AG04449 (cell line): ENCODE measurements at regions of chr3 and their contacts with region 1.

Region 1: DNA sequence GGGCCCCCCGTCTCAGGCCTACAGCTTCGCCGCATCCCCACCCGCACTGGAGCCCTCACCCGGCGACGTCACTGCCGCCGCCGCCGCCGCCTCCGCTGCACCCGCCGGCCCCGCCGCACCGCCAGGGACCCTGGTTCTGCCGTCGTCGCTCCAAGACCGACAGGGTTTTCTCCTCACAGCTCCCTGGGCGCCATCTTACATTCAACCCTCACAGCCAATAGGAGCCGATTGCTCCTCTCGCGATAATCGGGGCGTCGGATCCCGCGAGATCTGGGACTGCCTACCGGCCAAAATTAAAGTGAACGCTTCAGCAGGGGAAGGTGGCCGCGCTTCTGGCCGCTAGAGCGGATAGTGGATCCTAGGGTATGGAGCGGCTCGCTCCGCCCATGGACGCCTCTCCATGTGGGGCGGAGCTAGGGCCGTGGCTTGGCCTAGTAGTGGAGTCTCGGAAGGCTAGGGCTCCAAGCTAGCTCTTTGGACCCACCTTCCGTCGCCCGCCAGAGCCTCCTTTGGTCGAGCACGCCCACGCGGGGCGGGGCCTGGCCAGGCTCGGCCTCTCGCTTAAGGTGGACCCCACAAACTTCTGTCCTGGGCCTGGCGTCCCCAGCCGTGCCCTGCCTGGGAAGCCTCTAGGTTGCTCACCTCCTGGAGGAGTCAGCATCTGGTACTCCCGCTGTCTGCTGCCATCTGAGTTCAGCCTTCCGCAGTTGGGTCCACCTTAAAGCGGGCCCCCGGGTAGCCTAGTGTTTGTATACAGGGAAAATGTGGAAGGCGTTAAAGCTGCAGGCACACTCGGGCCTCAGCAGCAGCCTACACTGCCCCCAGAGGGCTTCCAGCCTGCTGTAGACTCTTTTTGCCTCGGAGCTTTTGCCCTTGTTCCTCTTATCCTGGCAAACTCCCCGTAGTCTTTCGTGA is at the start of gene QRICH1:
- DNase-seq: peak; percentile 87
- H3K4me3 ChIP-seq: peak within 1 kb of the TSS; percentile 89
- CTCF ChIP-seq: peak; percentile 70

Region 2: DNA sequence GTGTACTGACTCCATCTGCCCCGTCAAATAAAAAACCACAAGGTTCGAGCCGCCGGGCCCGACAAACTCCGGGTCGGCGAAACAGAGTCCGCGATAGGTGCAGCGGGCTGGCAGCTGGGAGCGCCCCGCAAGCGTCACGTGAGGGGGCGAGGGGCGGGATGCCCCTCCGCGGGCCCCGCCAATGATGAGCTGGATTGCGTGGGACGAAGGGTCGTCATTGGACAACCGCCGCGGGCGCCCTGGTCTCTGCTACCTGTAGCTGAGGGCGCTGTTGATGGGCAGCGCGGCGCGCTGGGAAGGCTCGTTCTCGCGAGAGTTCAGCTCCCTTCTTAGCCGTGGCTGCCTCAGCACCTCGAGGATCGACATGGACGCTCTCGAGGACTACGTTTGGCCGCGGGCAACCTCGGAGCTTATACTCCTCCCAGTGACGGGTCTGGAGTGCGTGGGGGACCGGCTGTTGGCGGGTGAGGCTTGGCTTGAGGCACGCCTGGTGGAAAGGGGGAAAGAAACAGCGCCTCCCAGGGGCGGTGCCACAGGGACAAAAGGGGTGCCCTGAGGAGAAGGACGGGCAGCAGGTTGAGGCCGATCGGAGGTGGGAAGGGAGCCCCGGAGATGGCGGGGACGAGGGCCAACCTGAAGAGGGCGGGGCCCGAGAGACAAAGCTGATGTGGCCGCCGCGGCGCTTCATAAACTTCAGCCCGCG is 86.9 kb before region 1 on chr3 and contains the start of gene WDR6:
- CTCF ChIA-PET with region 1: no interaction called
- POLR2A ChIA-PET with region 1: interaction called, 11 read pairs
- DNase-seq: peak; percentile 83
- H3K4me3 ChIP-seq: peak within 1 kb of the TSS; percentile 97
- CTCF ChIP-seq: peak; percentile 44

Region 3: GRCh38 chr3:49028673-49029562 is 65.2 kb before region 1 on chr3 and contains the start of gene IMPDH2:
- CTCF ChIA-PET with region 1: interaction called, 25 read pairs
- POLR2A ChIA-PET with region 1: interaction called, 25 read pairs
- DNase-seq: no peak
- H3K4me3 ChIP-seq: peak within 1 kb of the TSS; percentile 90
- CTCF ChIP-seq: peak; percentile 14

Region 4: DNA sequence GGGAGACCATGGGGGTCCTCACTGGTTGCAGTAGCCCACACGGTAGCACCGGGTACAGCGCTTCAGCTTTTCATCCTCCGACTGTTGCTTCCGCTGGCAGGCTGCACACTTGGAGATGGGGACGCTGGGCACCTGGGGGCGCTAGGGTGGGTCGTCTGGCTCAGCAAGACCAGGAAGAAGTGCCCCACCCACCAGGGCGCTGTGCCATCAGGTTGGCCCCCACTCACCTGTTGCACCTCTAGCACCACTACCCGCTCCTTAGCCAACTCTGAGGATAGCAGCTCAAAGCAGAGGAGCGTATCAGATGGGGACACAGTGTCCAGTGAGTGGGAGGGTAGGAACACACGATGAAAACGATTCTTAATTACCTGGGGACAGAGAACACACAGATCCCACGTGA is 18.2 kb after region 1 on chr3:
- CTCF ChIA-PET with region 1: interaction called, 15 read pairs
- POLR2A ChIA-PET with region 1: interaction called, 23 read pairs
- DNase-seq: no peak
- H3K4me3 ChIP-seq: no peak overlapping the region
- CTCF ChIP-seq: no peak

Region 5: DNA sequence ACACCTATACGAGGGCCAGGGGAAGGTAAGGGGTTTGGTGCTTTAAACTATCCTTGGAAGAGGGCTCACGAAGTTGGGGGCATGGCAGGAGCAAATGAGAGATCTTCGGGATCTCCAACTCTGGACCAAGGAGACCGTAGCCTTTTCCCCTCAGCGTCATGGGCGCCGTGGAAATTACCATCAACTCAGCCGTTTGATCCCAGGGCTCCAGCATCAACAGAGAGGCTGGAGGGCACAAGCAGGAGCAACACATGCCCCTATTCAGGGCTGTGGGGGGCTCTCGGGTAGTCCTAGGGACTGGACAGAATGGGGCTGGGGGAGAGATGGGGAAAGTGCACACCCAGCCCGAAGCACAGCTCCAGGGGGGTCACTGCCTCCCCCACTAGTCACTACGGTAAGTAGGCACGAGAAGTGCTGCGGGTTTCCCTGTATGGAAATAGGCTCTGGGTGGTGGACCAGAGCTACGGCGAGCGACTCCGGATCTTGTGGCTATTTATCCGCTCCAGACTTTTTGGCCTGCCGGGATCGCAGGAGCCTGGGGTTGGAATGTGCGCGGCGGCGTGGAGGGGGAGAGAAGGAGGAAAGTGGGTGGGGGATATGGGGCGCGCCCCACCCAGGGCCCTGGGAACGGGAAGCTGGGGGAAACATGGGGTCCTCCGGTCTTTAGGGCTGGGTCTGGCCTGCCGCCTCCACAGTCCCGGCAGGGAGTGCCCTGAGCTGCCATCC is 39.3 kb after region 1 on chr3:
- CTCF ChIA-PET with region 1: interaction called, 5 read pairs
- POLR2A ChIA-PET with region 1: interaction called, 31 read pairs
- DNase-seq: peak; percentile 59
- H3K4me3 ChIP-seq: peak overlapping the region; percentile 95
- CTCF ChIP-seq: no peak